Panc1 (cell line): ENCODE measurements at regions of chr15 and their contacts with region 1.

Region 1: GRCh38 chr15:79366691-79367090 is 55.8 kb downstream of the TMED3 start:
- DNase-seq: no peak
- ATAC-seq: no peak
- H3K4me3 ChIP-seq: no peak overlapping the region
- H3K27ac ChIP-seq: no peak overlapping the region
- H3K4me1 ChIP-seq: no peaks in the 10 kb centered on the region
- H3K27me3 ChIP-seq: no peaks in the 10 kb centered on the region
- CTCF ChIP-seq: no peak

Region 2: DNA sequence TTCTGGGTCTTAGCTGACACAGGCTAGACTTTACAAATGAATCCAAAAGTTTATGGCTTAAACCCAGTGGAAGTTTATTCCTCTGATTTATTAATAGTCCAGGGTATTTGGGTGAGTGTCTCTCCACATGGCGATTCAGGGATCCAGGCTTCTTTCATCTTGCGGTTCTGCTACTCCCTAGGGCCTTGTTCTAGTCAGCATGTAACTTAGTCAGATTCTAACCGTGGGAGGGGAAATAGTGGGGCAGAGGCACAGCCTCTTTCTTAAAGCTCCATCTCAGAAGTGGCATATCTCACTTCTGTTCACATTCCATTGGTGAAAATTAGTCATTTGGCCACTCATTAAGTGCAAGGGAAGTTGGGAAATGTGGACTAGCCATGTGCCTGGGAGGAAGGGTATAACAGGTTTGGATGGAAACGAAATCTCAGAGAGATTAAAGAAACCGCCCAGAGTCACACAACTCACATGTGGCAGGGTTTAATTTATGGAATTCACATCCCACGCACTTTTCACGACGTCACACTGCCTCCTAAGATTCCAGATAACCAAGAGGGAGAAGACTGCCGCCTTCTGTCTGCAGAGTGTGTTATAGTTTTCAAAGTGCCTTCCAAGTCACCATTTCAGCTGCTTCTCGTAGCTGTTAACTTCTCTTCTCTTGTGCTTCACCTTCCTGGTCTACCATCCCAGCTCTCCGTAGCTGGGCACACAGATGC is 264.7 kb before region 1 on chr15:
- CTCF ChIA-PET with region 1: no interaction called
- POLR2A ChIA-PET with region 1: interaction called, 10 read pairs
- in situ Hi-C with region 1: no loop called
- intact Hi-C with region 1: no loop called
- DNase-seq: no peak
- ATAC-seq: no peak
- H3K4me3 ChIP-seq: no peak overlapping the region
- H3K27ac ChIP-seq: no peak overlapping the region
- H3K4me1 ChIP-seq: no peaks in the 10 kb centered on the region
- H3K27me3 ChIP-seq: peaks cover 43% of the 10 kb centered on the region
- CTCF ChIP-seq: no peak

Region 3: GRCh38 chr15:79233236-79233635 is 133.5 kb before region 1 on chr15:
- CTCF ChIA-PET with region 1: no interaction called
- POLR2A ChIA-PET with region 1: no interaction called
- in situ Hi-C with region 1: no loop called
- intact Hi-C with region 1: no loop called
- DNase-seq: no peak
- ATAC-seq: no peak
- H3K4me3 ChIP-seq: no peak overlapping the region
- H3K27ac ChIP-seq: no peak overlapping the region
- H3K4me1 ChIP-seq: no peaks in the 10 kb centered on the region
- H3K27me3 ChIP-seq: peaks cover 11% of the 10 kb centered on the region
- CTCF ChIP-seq: no peak